ENCODE measurements at regions of chr4 and their contacts with region 1.

Region 1: GRCh38 chr4:26459054-26459755 is 31.1 kb downstream of the CCKAR start:
- DNase-seq: peak; percentile 77
- H3K4me3 ChIP-seq: no peak overlapping the region
- H3K27ac ChIP-seq: no peak overlapping the region
- H3K4me1 ChIP-seq: no peaks in the 10 kb centered on the region
- H3K27me3 ChIP-seq: no peaks in the 10 kb centered on the region
- CTCF ChIP-seq: peak; percentile 72

Region 2: DNA sequence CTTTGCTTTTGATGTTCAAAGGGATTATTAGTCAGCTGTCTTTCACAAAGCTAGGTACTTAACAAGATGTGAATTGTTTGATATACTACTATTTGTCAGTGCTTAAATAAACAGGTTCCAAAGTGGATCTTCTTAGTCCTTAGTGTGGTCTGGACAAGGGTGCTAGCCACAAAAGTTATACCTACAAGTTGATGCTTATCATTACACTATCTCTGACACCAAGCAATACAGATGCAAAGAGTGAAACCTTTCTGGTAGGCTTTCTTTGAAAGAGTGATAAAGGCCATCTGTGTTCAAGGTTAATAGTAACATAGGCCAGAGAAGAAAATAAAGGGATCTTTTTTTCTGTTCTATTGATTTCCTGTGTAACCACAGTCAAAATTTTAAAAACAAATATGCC is 150.6 kb before region 1 on chr4:
- CTCF ChIA-PET with region 1: no interaction called
- POLR2A ChIA-PET with region 1: interaction called, 11 read pairs
- intact Hi-C with region 1: no loop called
- DNase-seq: no peak
- H3K4me3 ChIP-seq: no peak overlapping the region
- H3K27ac ChIP-seq: no peak overlapping the region
- H3K4me1 ChIP-seq: no peaks in the 10 kb centered on the region
- H3K27me3 ChIP-seq: no peaks in the 10 kb centered on the region
- CTCF ChIP-seq: no peak

Region 3: DNA sequence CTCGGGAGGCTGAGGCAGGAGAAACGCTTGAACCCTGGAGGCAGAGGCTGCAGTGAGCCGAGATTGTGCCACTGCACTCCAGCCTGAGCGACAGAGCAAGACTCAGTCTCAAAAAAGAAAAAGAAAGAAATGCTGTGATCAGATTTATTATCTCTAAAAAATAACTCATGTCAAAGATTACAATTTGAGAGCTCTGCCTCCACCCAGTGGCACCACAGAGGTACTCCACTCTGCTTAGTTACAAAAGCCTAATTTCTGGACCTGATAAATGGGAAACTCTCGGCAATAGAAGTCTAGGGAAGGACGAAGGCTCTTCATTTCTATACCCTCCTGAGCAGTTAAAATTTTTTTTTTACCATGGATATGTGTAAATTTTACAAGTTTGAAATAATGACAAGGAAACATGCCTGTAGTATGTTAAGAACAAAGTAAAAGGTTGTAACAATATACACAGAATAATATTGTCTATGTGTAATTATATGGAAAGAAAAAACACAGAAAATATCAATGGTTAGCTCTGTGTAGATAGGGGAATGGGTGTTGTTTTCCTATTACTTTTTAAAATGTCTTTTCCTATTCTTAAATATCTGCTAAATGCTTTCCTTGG is 551.2 kb after region 1 on chr4:
- CTCF ChIA-PET with region 1: no interaction called
- POLR2A ChIA-PET with region 1: no interaction called
- intact Hi-C with region 1: loop called (anchors 2 kb)
- DNase-seq: peak; percentile 84
- H3K4me3 ChIP-seq: no peak overlapping the region
- H3K27ac ChIP-seq: no peak overlapping the region
- H3K4me1 ChIP-seq: peaks cover 36% of the 10 kb centered on the region
- H3K27me3 ChIP-seq: no peaks in the 10 kb centered on the region
- CTCF ChIP-seq: peak; percentile 89

Measured in A673 (cell line).